Activated CD4-positive, alpha-beta memory T cell treated with anti-CD3 and anti-CD28 coated beads for 36 hours (primary cell): ENCODE measurements at regions of chr5 and their contacts with region 1.

Region 1: GRCh38 chr5:175517818-175518450 is 39.6 kb downstream of the SFXN1 start:
- DNase-seq: peak; percentile 95
- H3K4me3 Mint-ChIP-seq: peak overlapping the region; percentile 53
- H3K27ac Mint-ChIP-seq: peak overlapping the region; percentile 100
- H3K4me1 Mint-ChIP-seq: peaks cover 92% of the 10 kb centered on the region
- H3K27me3 Mint-ChIP-seq: no peaks in the 10 kb centered on the region

Region 2: DNA sequence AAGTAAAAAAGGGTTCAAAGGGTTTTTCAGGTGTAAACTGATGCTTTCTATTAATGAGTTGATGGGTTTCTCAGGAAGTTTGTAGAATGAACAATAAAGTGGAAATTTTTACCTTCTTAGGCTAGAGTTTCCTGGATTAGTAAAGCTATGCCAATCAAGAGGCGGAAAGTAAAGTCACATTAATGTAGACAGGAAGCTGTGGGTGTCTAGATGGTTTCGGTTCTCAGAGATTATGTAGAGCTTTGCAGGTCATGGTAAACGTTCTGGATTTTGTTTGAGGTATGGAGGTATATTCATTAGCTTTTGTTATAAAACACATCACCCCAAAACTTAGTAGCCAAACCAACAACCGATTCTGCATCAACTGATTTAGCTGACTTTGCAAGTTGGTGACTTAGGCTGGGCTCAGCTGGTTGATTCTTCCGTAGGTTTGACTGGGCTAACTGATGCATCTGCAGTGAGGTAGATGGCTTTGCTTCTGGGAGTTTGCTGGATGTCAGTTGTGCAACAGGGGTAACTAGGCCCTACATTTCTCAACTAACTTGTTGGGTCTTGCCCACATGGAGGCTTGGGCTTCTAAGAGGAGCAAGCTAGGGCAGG is 519.7 kb before region 1 on chr5:
- CTCF ChIA-PET with region 1: no interaction called
- POLR2A ChIA-PET with region 1: no interaction called
- intact Hi-C with region 1: loop called (anchors 5 kb)
- DNase-seq: no peak
- H3K4me3 Mint-ChIP-seq: no peak overlapping the region
- H3K27ac Mint-ChIP-seq: peak overlapping the region; percentile 75
- H3K4me1 Mint-ChIP-seq: peaks cover 13% of the 10 kb centered on the region
- H3K27me3 Mint-ChIP-seq: peaks cover 1% of the 10 kb centered on the region

Region 3: GRCh38 chr5:175354964-175355363 is 163.0 kb before region 1 on chr5:
- CTCF ChIA-PET with region 1: no interaction called
- POLR2A ChIA-PET with region 1: no interaction called
- intact Hi-C with region 1: no loop called
- DNase-seq: no peak
- H3K4me3 Mint-ChIP-seq: no peak overlapping the region
- H3K27ac Mint-ChIP-seq: no peak overlapping the region
- H3K4me1 Mint-ChIP-seq: no peaks in the 10 kb centered on the region
- H3K27me3 Mint-ChIP-seq: peaks cover 6% of the 10 kb centered on the region

Region 4: DNA sequence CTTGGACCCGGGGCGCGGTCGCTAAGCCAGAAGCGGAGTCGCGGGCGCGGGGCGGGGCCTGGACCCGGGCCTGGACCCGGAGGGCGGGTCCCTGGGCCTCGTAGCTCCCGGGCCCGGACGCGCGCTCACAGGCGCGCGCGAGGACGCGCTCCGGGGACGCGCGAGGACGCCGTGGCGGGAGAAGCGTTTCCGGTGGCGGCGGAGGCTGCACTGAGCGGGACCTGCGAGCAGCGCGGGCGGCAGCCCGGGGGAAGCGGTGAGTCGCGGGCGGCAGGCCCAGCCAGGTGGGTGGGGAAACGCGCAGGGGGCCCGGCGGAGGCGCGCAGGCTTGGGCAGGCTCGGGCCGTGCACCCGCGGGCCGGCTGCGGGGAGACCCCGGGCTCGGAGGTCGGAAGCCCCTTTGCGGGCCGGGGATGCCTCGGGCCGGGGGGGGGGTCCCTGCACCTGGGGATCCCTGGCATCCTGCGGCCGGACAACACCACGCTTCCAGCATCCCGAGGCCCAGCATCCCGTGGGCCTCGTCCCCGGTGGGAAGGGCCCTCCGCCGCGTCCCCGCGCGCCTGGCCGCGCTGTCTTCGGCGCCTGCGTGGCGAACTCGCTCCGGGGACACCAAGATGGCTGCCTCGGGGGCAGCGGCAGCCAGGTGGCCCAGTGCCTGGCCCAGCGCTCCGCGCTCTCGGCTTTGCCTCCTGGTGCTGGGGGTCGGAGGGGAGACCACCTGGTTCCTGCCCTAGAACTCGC is 39.4 kb before region 1 on chr5 and contains the start of gene SFXN1:
- CTCF ChIA-PET with region 1: interaction called, 3 read pairs
- POLR2A ChIA-PET with region 1: interaction called, 11 read pairs
- intact Hi-C with region 1: loop called (anchors 1 kb)
- DNase-seq: peak; percentile 90
- H3K4me3 Mint-ChIP-seq: peak within 1 kb of the TSS; percentile 96
- H3K27ac Mint-ChIP-seq: peak within 1 kb of the TSS; percentile 96
- H3K4me1 Mint-ChIP-seq: peaks cover 46% of the 10 kb centered on the region
- H3K27me3 Mint-ChIP-seq: no peaks in the 10 kb centered on the region
- total RNA-seq, gene SFXN1: 298 to 300 TPM

Region 5: GRCh38 chr5:175494280-175495183 is 23.4 kb before region 1 on chr5:
- CTCF ChIA-PET with region 1: interaction called, 3 read pairs
- POLR2A ChIA-PET with region 1: interaction called, 5 read pairs
- intact Hi-C with region 1: loop called (anchors 1 kb)
- DNase-seq: peak; percentile 49
- H3K4me3 Mint-ChIP-seq: no peak overlapping the region
- H3K27ac Mint-ChIP-seq: peak overlapping the region; percentile 72
- H3K4me1 Mint-ChIP-seq: peaks cover 57% of the 10 kb centered on the region
- H3K27me3 Mint-ChIP-seq: no peaks in the 10 kb centered on the region

Region 6: DNA sequence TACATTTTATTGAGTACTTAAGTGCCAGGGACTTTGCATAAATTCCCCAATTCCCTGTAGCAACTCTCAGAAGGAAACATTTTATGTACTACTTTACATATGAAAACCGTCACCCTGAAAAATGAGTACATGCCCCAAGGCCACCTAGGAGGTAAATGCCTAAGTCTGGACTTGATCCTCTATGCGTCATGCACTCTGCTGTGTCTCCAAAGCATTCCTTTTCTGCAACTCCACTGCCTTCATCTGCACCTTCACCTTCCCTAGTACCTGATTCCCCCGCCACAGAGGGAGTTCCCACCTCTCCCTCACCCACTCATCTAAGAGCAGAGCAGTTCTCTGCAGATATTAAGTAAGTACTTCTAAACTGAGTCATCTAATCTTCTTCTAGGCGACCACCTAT is 64.8 kb after region 1 on chr5:
- CTCF ChIA-PET with region 1: no interaction called
- POLR2A ChIA-PET with region 1: no interaction called
- intact Hi-C with region 1: no loop called
- DNase-seq: no peak
- H3K4me3 Mint-ChIP-seq: no peak overlapping the region
- H3K27ac Mint-ChIP-seq: no peak overlapping the region
- H3K4me1 Mint-ChIP-seq: peaks cover 8% of the 10 kb centered on the region
- H3K27me3 Mint-ChIP-seq: no peaks in the 10 kb centered on the region

Region 7: GRCh38 chr5:175696139-175696854 is 178.4 kb after region 1 on chr5:
- CTCF ChIA-PET with region 1: interaction called, 3 read pairs
- POLR2A ChIA-PET with region 1: no interaction called
- intact Hi-C with region 1: loop called (anchors 1 kb)
- DNase-seq: peak; percentile 92
- H3K4me3 Mint-ChIP-seq: peak overlapping the region; percentile 60
- H3K27ac Mint-ChIP-seq: peak overlapping the region; percentile 90
- H3K4me1 Mint-ChIP-seq: peaks cover 16% of the 10 kb centered on the region
- H3K27me3 Mint-ChIP-seq: no peaks in the 10 kb centered on the region

Region 8: GRCh38 chr5:175821790-175822211 is 303.9 kb after region 1 on chr5:
- CTCF ChIA-PET with region 1: no interaction called
- POLR2A ChIA-PET with region 1: no interaction called
- intact Hi-C with region 1: loop called (anchors 1 kb)
- DNase-seq: peak; percentile 57
- H3K4me3 Mint-ChIP-seq: peak overlapping the region; percentile 42
- H3K27ac Mint-ChIP-seq: peak overlapping the region; percentile 88
- H3K4me1 Mint-ChIP-seq: peaks cover 21% of the 10 kb centered on the region
- H3K27me3 Mint-ChIP-seq: peaks cover 19% of the 10 kb centered on the region

Region 9: GRCh38 chr5:176388444-176389134 is 870.7 kb after region 1 on chr5 and contains the starts of genes HIGD2A and NOP16:
- CTCF ChIA-PET with region 1: no interaction called
- POLR2A ChIA-PET with region 1: no interaction called
- intact Hi-C with region 1: loop called (anchors 10 kb)
- DNase-seq: peak; percentile 100
- H3K4me3 Mint-ChIP-seq: peak within 1 kb of the TSS; percentile 99
- H3K27ac Mint-ChIP-seq: peak within 1 kb of the TSS; percentile 98
- H3K4me1 Mint-ChIP-seq: peaks cover 27% of the 10 kb centered on the region
- H3K27me3 Mint-ChIP-seq: no peaks in the 10 kb centered on the region
- total RNA-seq, gene HIGD2A: 112 to 119 TPM
- total RNA-seq, gene NOP16: 52.5 to 57.6 TPM